ENCODE measurements at regions of chr1 and their contacts with region 1.

Region 1: GRCh38 chr1:211133836-211134669 is at the start of gene KCNH1:
- H3K4me3 ChIP-seq: peak within 1 kb of the TSS; percentile 43
- H3K27ac ChIP-seq: no peak within 1 kb of the TSS; the same call in 1 of the 2 replicates
- H3K4me1 ChIP-seq: no peaks in the 10 kb centered on the region
- CTCF ChIP-seq: peak; percentile 89

Region 2: DNA sequence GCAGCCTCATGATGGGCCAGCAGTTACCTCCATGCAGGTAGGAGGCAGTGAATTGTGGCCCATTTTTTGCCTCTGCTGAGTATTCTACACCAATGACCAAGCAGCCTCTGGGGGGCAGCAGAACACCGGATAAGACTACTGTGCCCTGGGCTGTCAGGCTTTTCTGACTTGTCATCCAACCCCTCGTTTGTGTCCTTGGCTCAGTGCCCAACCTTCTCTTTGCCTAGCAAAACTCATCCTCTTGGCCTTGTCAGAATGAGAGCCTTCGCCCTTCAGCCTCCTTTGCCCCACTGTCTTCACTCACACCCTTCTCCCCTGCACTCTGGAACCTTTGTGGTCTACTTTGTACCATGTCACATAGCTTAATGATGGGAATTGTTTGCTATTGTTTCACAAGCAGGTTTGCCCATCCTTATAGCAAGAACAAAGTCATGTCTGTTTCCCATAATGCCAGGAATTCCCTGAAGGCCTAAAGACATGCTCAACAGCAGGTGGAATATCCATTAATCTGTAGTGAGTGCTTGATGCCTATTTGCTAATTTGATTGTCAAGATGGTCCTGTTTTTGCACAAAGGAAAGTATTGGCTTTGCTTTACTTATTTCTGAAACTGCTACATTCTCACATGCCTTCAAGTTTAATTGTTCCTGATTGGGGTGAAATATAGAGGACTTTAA is 549.5 kb before region 1 on chr1:
- CTCF ChIA-PET with region 1: interaction called, 78 read pairs
- POLR2A ChIA-PET with region 1: no interaction called
- H3K4me3 ChIP-seq: no peak overlapping the region
- H3K27ac ChIP-seq: no peak overlapping the region
- H3K4me1 ChIP-seq: peaks cover 2% of the 10 kb centered on the region; the same call in 1 of the 2 replicates
- CTCF ChIP-seq: peak; percentile 85

Region 3: GRCh38 chr1:211174375-211174774 is 40.3 kb after region 1 on chr1:
- CTCF ChIA-PET with region 1: no interaction called
- POLR2A ChIA-PET with region 1: no interaction called
- H3K4me3 ChIP-seq: no peak overlapping the region
- H3K27ac ChIP-seq: no peak overlapping the region
- H3K4me1 ChIP-seq: no peaks in the 10 kb centered on the region
- CTCF ChIP-seq: no peak

Region 4: DNA sequence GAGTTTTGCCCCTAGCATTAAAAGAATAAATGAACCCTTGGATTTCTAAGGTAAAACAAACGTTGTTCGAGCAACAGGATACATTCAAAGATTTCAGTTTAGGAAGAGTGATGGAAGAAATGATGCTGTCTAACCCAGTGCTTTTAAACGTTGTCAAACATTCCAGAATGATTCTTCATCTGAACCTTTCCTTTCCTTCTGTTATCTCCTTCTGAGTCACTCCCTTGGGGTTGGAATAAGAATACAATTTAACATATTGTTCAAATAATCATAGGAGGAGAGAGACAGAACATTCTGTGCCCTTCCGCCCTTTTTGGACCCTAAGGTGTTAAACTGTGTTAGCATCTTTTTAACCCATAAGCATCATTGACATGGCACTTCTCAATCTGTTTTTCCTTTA is 64.1 kb after region 1 on chr1:
- CTCF ChIA-PET with region 1: no interaction called
- POLR2A ChIA-PET with region 1: no interaction called
- H3K4me3 ChIP-seq: no peak overlapping the region
- H3K27ac ChIP-seq: no peak overlapping the region
- H3K4me1 ChIP-seq: no peaks in the 10 kb centered on the region
- CTCF ChIP-seq: no peak